Activated T-helper 1 cell treated with anti-CD3 and anti-CD28 coated beads, Interleukin-12 subunit alpha, Interleukin-12 subunit beta, Interleukin-2, Interleukin-4 antibody, amounts not matched to agents 30 ng/mL and 10 ng/mL and 1 ng/mL, durations not matched to agents 14 hours and 24 hours and 36 hours (primary cell): ENCODE measurements at regions of chrX and their contacts with region 1.

Region 1: DNA sequence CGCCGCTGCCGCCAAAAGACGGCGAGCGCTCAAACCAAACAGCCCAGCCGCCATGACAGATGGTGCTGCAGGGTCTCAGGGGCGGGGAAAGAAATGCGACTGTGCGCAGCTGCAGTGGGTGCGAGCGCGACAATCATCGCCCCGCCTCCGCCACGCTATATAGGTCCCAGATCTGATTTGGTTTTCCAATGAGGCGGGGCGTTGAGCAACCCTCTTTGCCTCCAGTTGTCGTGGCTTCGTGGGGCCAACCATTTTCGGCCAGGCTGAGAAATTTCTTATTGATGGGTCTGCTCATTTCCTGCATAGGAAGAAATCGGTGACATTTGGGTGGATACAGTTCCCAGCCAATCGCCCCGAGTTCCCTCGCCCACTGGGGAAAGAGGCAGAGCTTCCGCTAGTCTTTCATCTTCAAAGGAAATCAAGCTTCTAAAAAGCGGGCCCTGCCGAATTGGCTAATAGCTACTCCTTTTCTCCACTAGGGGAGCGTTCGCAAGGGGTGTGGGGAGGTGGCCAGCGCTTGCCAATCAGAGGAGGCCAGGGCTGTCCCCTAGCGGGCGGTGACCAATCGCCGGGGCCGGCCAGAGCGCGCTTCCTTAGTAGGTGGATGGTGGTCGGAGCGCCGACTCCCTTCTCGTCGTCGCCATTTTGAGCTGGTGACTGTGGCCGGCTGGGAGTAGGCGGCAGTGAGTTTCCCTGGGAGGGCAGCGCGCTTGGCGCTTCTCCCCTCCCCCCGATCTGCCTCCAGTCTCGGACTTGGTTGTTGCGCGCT is at the starts of genes NDUFB11 and RBM10:
- DNase-seq: peak; percentile 89
- H3K4me3 Mint-ChIP-seq: peak within 1 kb of the TSS; percentile 100
- H3K27ac Mint-ChIP-seq: peak within 1 kb of the TSS; percentile 100
- H3K4me1 Mint-ChIP-seq: peaks cover 18% of the 10 kb centered on the region
- H3K27me3 Mint-ChIP-seq: peaks cover 2% of the 10 kb centered on the region
- total RNA-seq, gene NDUFB11: 84.5 and 88.7 TPM in 2 replicates
- total RNA-seq, gene RBM10: 62.0 and 64.1 TPM in 2 replicates

Region 2: DNA sequence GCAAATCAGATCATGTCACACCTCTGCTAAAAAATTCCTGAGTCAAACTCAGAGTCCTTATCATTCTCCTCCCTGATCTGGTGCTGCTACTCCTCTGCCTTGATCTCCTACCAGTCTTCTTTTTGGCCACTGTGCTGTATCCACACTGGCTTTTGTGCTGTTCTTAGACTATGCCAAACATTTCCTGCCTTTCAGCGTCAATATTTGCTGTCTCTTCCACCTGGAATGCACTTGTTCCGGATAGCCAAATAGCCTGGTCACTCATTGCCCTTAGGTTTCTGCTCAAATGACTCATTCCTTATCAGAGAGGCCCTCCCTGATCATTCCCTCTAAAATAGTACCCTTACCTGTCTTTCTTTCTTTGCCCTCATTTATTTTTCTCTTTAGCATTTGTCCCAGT is 332.4 kb before region 1 on chrX:
- intact Hi-C with region 1: no loop called
- DNase-seq: no peak
- H3K4me3 Mint-ChIP-seq: no peak overlapping the region
- H3K27ac Mint-ChIP-seq: no peak overlapping the region
- H3K4me1 Mint-ChIP-seq: no peaks in the 10 kb centered on the region
- H3K27me3 Mint-ChIP-seq: peaks cover 8% of the 10 kb centered on the region

Region 3: DNA sequence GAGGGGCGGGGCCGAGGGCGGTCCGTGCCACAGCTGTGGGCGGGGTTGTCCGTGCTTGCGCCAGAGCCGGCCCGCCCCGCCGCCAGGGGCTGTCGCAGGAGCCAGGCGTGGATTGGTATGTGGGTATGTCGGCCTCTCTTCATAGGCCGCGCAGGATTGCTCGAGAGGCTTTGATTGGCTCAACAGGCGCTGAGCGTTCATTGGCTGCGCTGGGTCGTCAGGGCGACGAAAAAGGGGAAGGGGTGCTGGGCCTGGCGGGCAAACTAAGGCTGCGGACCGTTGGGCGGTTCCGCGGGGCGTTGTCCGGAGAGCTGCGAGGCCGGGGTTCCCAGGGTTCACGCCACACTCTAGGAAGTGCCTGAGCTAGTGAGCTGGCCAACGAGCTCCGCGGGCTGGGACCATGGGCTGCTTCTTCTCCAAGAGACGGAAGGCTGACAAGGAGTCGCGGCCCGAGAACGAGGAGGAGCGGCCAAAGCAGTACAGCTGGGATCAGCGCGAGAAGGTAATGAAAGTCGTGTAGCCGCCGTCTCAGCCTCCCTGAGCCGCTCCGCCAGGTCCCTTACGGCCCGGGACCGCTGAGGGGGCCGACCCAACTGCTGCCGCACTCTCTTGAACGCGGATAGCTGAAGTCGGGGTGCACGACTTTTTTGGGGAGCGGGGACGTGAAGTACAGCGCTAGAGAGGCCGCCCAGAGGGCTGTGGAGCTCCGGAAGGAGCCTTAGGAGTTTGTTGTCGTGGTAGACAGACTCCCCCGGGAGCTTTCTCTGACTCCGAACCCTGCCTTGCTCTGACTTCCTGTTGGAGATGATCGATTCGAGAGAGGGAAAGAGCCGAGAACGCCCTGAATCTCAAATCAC is 307.9 kb before region 1 on chrX and contains the start of gene RP2:
- intact Hi-C with region 1: loop called (anchors 1 kb)
- DNase-seq: peak; percentile 79
- H3K4me3 Mint-ChIP-seq: peak within 1 kb of the TSS; percentile 96
- H3K27ac Mint-ChIP-seq: peak within 1 kb of the TSS; percentile 89
- H3K4me1 Mint-ChIP-seq: no peaks in the 10 kb centered on the region
- H3K27me3 Mint-ChIP-seq: peaks cover 4% of the 10 kb centered on the region
- total RNA-seq, gene RP2: 7.1 and 7.5 TPM in 2 replicates

Region 4: DNA sequence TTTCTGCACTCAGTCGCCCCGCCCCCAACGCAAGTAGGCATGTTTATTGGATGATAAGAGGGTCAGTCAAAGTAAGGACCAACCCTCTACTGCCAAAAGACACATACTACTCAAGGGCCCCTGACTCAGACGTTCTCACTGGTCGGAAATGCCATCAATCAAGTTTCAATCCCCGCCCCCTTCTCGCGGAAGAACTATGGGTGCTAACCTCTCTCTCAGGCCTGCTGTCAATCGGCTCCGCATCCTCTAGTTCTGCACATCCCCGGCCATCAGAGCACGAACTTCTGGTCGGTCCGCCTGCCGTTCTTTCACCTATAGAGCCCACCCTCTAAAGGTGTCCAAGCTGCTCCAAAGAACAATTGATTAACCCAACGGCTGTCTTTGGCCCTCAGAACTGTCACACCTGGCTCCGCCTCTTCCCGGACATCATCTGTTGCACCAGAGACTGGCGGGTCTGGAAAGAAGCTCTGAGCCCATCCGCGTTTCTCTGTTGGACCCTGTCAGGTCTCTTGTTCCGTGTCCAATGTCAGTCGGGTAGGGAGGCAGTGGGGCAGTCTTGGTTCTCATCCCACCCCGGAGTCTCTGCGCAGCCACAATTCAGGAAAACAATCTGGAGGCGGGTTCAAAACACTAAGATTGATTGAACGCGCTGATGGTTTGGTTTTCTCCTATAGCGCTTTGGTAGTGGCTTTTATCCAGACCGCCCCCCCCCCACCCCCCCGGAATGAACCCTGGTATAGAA is 15.5 kb before region 1 on chrX:
- intact Hi-C with region 1: loop called (anchors 1 kb)
- DNase-seq: peak; percentile 86
- H3K4me3 Mint-ChIP-seq: peak overlapping the region; percentile 97
- H3K27ac Mint-ChIP-seq: peak overlapping the region; percentile 98
- H3K4me1 Mint-ChIP-seq: no peaks in the 10 kb centered on the region
- H3K27me3 Mint-ChIP-seq: no peaks in the 10 kb centered on the region

Region 5: DNA sequence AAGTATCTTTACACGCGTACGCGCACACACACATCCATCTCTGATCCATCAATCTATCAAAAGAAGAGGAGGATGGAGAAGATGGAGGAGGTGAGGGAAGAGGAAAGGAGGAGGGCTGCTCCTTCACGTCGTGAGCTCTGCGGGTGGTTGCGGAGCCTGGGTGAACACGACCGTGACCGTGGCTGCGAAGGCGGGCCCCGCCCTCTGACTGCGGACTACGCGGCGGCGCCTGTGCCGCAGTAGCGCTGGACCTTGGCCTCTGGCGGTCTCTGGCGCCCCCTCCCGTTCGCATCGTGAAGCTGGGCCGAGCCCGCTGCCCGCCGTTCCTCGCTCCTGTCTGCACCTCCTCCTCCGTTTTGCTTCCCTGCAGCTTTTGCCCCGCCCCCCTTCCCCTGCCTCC is 378.5 kb after region 1 on chrX:
- intact Hi-C with region 1: loop called (anchors 1 kb)
- DNase-seq: peak; percentile 69
- H3K4me3 Mint-ChIP-seq: peak overlapping the region; percentile 70
- H3K27ac Mint-ChIP-seq: no peak overlapping the region
- H3K4me1 Mint-ChIP-seq: no peaks in the 10 kb centered on the region
- H3K27me3 Mint-ChIP-seq: no peaks in the 10 kb centered on the region

Region 6: DNA sequence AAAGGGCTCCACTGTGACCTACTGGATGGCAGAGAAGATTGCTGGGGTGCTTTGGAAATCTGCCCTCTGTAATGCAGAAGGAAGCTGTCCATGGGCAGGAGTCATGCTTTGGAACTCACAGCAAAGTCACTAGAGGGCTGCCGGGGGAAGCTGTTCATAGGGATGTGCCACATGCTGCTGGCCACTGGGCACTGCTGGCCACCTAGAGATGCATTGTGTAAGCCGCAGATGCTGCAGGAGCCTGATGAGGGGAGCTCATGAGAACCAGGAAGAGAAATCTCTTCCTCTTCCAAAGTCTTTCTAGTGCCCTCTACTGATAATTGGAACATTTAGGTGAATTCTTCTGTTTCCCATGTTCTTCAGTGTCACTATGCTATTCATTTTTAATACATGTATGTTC is 545.4 kb after region 1 on chrX:
- intact Hi-C with region 1: no loop called
- DNase-seq: no peak
- H3K4me3 Mint-ChIP-seq: no peak overlapping the region
- H3K27ac Mint-ChIP-seq: no peak overlapping the region
- H3K4me1 Mint-ChIP-seq: no peaks in the 10 kb centered on the region
- H3K27me3 Mint-ChIP-seq: no peaks in the 10 kb centered on the region

Region 7: DNA sequence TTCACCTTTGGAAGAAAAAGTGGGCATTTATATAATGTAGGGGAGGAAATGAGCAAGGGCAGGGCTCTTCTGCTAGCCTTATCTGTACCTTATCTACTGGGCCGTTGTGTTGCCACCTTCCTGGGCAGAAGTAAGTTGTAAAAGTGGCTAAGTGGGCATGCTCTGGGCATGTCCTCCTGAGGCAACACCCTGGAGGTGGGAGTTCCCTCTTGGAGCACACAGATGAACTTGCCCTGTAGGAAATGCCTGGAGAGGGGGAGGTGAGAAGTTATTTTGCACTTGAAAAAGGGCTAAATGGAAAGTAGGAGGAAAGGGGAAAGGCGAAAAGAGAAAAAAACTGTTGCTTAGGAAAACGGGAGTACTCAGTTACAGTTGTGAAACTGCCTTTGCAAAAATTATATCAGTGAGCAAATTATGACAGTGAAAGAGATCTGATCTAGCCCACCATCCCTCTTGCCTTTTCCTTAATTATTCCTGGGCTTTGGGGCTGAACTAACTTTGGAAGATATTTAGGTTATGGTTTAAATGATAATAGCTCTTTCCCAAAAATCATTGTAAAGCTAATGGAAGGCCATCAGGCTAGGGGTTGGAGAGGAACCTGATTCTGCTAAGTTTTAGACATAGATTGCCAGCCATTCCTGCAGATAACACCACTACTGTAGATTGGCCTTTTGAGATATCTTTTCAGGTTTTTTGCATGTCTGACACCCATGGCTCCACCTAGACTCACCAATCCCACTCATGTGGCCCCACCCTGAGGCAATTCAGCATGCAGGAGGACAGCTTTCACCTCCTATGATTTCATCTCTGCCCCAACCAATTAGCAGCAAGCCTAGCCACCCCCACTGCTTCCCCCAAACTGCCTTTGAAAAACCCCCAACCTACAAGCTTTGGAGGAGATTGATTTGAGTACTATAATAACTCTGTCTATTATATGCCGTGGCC is 671.4 kb after region 1 on chrX:
- intact Hi-C with region 1: no loop called
- DNase-seq: no peak
- H3K4me3 Mint-ChIP-seq: no peak overlapping the region
- H3K27ac Mint-ChIP-seq: no peak overlapping the region
- H3K4me1 Mint-ChIP-seq: no peaks in the 10 kb centered on the region
- H3K27me3 Mint-ChIP-seq: no peaks in the 10 kb centered on the region